ENCODE measurements at regions of chr19 and their contacts with region 1.

Region 1: DNA sequence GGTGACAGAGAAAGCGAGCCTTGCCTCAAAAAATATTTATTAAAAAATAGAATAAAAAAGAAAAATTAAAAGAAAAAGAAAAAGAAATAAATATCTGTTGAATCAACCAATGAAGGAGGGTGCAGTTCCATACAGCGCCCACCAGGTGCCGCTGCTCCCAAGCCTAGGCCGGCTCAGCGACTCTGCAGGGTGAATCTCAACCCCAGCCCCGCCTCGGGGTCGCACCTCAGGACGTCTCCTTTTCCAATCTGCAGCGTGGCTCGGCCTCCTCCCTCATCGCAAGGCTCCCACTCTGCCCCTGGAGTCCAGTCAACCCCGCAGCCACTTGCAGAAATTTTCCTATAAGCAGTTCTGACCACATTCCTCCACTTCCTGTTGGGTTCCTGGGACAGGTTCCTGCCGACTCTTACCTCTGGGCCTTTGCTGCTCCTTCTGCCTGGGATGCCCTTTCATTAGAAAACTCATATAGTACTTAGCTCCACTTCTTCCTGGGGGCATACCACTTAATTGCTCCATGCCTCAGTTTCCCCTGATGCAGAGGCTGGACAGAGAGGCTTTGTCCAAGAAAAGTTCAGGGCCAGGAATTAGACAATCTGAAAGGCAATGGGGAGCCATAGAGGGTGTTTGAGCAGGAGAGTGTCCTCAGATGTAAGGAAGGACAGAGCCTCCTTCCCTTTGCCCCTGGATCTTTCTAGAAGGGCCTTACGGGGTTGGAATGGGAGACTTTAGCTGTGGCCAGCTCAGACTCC is 24.3 kb downstream of the NFILZ start:
- DNase-seq: peak; percentile 84
- ATAC-seq: peak; percentile 52
- H3K4me3 Mint-ChIP-seq: peak overlapping the region; percentile 68
- H3K27ac Mint-ChIP-seq: peak overlapping the region; percentile 32
- H3K4me1 Mint-ChIP-seq: peaks cover 12% of the 10 kb centered on the region
- H3K27me3 Mint-ChIP-seq: peaks cover 8% of the 10 kb centered on the region

Region 2: GRCh38 chr19:8517551-8518442 is 137.0 kb before region 1 on chr19:
- POLR2A ChIA-PET with region 1: no interaction called
- DNase-seq: peak; percentile 61
- ATAC-seq: peak; percentile 43
- H3K4me3 Mint-ChIP-seq: peak overlapping the region; percentile 71
- H3K27ac Mint-ChIP-seq: peak overlapping the region; percentile 96
- H3K4me1 Mint-ChIP-seq: peaks cover 39% of the 10 kb centered on the region
- H3K27me3 Mint-ChIP-seq: no peaks in the 10 kb centered on the region

Region 3: DNA sequence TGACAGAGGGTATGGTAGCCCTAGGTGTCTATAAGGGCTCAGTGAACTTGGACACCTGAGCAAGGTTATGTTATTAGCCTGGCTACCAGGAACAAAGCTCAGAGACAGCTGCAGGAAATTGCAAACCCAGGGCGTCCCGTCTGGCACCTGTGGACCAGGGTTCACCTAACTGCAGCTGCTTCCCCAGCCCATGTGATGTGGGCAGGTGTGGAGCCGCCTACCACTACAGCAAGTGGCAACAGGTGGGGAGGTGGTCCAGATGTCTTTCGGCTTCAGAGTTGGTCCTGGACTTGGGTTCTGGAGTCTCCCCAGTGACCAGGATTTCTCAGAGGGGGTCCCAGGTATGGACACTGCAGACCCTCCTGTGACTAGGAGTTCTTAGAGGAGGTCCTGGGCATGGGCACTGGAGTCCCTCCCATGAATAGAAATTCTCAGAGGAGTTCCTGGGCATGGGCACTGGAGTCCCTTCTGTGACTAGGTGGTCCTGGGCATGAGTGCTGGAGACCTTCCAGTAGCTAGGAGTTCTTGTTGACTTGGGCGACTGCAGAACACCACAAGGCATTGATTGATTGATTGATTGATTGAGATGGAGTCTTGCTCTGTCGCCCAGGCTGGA is 18.6 kb after region 1 on chr19:
- POLR2A ChIA-PET with region 1: no interaction called
- DNase-seq: no peak
- ATAC-seq: no peak
- H3K4me3 Mint-ChIP-seq: no peak overlapping the region
- H3K27ac Mint-ChIP-seq: no peak overlapping the region
- H3K4me1 Mint-ChIP-seq: peaks cover 45% of the 10 kb centered on the region
- H3K27me3 Mint-ChIP-seq: peaks cover 16% of the 10 kb centered on the region

Region 4: GRCh38 chr19:8697671-8698432 is 43.1 kb after region 1 on chr19:
- POLR2A ChIA-PET with region 1: interaction called, 19 read pairs
- DNase-seq: no peak
- ATAC-seq: no peak
- H3K4me3 Mint-ChIP-seq: no peak overlapping the region
- H3K27ac Mint-ChIP-seq: no peak overlapping the region
- H3K4me1 Mint-ChIP-seq: peaks cover 41% of the 10 kb centered on the region
- H3K27me3 Mint-ChIP-seq: peaks cover 20% of the 10 kb centered on the region

Measured in activated naive CD8-positive, alpha-beta T cell treated with anti-CD3 and anti-CD28 coated beads, Interleukin-2, amount 10 ng/mL, durations not matched to agents 7 days and 5 days (primary cell).